ENCODE measurements at regions of chr9 and their contacts with region 1.

Region 1: GRCh38 chr9:92634712-92635605 is 35.0 kb downstream of the IPPK start:
- DNase-seq: peak; percentile 77 to 90 (median 80)
- ATAC-seq: peak; percentile 75 to 91 (median 87)
- H3K4me3 ChIP-seq: peak overlapping the region in 1 of 12 donors; percentile 19
- H3K27ac ChIP-seq: peak overlapping the region in 6 of 12 donors; percentile 3 to 62 (median 36)
- H3K4me1 ChIP-seq: peaks cover 0 to 22% (median 4%) of the 10 kb centered on the region in 12 donors
- H3K27me3 ChIP-seq: no peaks in the 10 kb centered on the region
- CTCF ChIP-seq: peak; percentile 85 to 98 (median 90)
- POLR2A ChIP-seq: no peak

Region 2: DNA sequence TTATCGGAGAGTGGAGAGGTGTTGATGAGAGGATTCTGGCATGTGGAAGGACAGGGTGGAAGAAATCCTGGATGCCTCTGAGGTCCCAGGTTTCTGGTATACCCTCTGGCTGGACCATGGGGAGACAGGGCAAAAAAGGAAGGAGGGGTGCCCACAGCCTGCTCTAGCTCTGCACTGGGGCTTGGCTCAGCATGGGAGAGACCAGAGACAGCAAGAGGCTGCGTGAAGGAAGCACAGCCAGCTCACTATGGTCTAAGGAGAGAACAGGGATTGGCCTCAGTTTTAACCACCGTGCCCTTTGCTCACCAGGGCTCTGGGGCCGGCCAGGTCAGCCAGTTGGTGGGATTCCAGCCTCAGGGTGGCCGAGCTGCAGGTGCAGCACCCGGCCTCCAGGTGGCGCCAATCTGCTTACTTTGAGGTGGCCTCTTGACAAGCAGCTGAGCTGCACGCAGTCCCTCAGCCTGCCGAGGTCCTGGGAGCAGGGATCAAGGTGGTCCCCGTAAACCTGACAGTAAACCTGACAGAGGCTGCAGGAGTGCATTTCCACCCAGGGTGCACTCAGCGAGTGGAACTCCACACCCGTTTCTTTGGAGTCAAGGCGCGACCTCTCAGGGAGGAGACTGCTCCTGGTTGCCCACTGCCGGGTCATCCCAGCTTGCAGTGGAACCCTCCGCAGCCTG is 494.7 kb before region 1 on chr9:
- intact Hi-C with region 1: loop called (anchors 2 to 10 kb)
- DNase-seq: peak; percentile 72 to 88 (median 74)
- ATAC-seq: peak; percentile 58 to 76 (median 71)
- H3K4me3 ChIP-seq: peak overlapping the region in 9 of 12 donors; percentile 12 to 60 (median 49)
- H3K27ac ChIP-seq: no peak overlapping the region
- H3K4me1 ChIP-seq: peaks cover 0 to 21% (median 8%) of the 10 kb centered on the region in 12 donors
- H3K27me3 ChIP-seq: peaks cover 4 to 17% (median 7%) of the 10 kb centered on the region in 9 donors
- CTCF ChIP-seq: peak; percentile 82 to 96 (median 92)
- POLR2A ChIP-seq: no peak

Region 3: GRCh38 chr9:92325269-92325990 is 309.5 kb before region 1 on chr9 and contains the starts of genes CENPP and NOL8:
- intact Hi-C with region 1: loop called in 6 of 10 experiments (anchors 1 to 10 kb)
- DNase-seq: peak; percentile 86 to 91 (median 87)
- ATAC-seq: peak; percentile 98 to 99 (median 98)
- H3K4me3 ChIP-seq: peak within 1 kb of the TSS; percentile 53 to 90 (median 80)
- H3K27ac ChIP-seq: peak within 1 kb of the TSS; percentile 86 to 99 (median 96)
- H3K4me1 ChIP-seq: peaks cover 0 to 31% (median 16%) of the 10 kb centered on the region in 12 donors
- H3K27me3 ChIP-seq: no peaks in the 10 kb centered on the region
- CTCF ChIP-seq: no peak
- POLR2A ChIP-seq: no peak
- total RNA-seq, gene CENPP: 1.2 to 5.8 (median 3.1) TPM
- total RNA-seq, gene NOL8: 8.1 to 25.6 (median 18.1) TPM

Region 4: DNA sequence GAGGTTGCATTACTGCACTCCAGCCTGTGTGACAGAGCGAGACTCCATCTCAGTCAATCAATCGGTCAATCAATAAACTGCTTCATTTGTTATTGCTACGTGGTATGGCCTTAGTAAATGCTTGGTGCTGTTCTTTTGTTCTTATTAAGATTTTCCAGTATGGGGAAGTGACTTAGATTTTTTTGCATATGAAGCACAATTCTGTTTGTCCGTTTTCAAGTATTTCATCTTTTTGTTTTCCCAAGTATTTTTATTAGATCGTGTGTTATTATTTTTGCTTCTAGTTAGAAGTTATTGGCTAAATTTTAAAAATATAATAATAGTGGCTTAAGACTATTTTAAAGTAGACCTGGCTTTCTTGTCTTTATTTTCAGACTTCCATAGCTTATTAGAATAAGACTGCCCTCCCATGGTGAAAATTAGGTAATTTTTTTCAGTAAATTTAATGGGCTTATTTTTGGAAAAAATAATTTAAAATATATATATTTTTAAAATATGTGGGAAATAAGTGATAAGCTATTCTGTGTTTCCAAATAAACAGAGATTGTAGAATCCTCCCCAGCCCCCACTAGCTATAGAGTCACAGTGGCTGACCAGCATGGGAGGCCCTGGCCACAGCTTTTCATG is 195.9 kb before region 1 on chr9:
- intact Hi-C with region 1: loop called in 1 of 10 experiments (anchors 5 kb)
- DNase-seq: no peak
- ATAC-seq: no peak
- H3K4me3 ChIP-seq: peak overlapping the region in 1 of 12 donors; percentile 3
- H3K27ac ChIP-seq: no peak overlapping the region
- H3K4me1 ChIP-seq: peaks cover 0 to 7% (median 0%) of the 10 kb centered on the region in 12 donors
- H3K27me3 ChIP-seq: no peaks in the 10 kb centered on the region
- CTCF ChIP-seq: peak in 11 of 12 donors; percentile 18 to 57 (median 46)
- POLR2A ChIP-seq: no peak

Region 5: DNA sequence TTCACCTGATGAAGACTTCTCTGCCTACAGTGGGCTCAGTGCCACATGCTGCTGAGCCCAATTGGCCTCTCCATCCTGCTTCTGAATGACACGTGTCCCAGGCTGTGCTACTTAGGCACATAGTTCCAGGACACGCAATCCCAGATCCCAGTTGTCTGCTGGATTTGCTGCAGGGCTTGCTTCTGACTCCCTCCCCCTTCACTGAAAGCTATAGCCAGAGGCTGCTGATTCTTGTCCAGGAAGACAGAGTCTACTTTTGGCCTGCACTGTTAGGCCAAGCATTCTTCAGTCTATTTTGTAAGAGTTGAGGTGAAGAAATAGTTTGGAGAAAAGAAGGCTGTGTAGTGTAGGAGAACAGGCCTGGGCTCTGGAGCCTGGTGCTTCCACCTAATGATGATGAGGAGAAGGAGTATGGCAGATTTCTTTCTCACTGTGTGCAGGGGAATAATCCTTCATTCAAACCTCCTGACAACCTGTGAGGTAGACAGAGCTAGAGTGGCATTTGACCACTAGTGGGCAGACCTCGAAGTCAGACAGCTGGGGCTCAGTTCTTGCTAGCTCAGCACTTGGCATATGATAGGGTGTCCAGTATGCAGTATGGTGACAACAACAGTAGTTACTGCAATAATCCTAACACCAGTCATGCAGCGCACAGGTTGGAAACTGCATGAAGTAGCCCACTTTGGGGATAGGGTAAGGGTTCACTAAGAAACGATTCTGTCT is 133.1 kb before region 1 on chr9:
- intact Hi-C with region 1: loop called in 3 of 10 experiments (anchors 5 to 10 kb)
- DNase-seq: peak in 2 of 5 donors; percentile 40 to 43
- ATAC-seq: peak; percentile 58 to 80 (median 64)
- H3K4me3 ChIP-seq: no peak overlapping the region
- H3K27ac ChIP-seq: peak overlapping the region in 6 of 12 donors; percentile 1 to 67 (median 18)
- H3K4me1 ChIP-seq: peaks cover 0 to 63% (median 20%) of the 10 kb centered on the region in 12 donors
- H3K27me3 ChIP-seq: no peaks in the 10 kb centered on the region
- CTCF ChIP-seq: peak in 10 of 12 donors; percentile 23 to 54 (median 33)
- POLR2A ChIP-seq: no peak